ENCODE measurements at regions of chr17 and their contacts with region 1.

Region 1: GRCh38 chr17:17919169-17920107 is 52.8 kb downstream of the TOM1L2 start:
- DNase-seq: peak; percentile 39
- H3K4me3 ChIP-seq: no peak overlapping the region
- H3K27ac ChIP-seq: peak overlapping the region; percentile 21
- H3K27me3 ChIP-seq: no peaks in the 10 kb centered on the region
- CTCF ChIP-seq: peak; percentile 89

Region 2: GRCh38 chr17:17890773-17891759 is 28.4 kb before region 1 on chr17:
- CTCF ChIA-PET with region 1: interaction called, 16 read pairs
- POLR2A ChIA-PET with region 1: no interaction called
- DNase-seq: peak; percentile 42
- H3K4me3 ChIP-seq: no peak overlapping the region
- H3K27ac ChIP-seq: no peak overlapping the region
- H3K27me3 ChIP-seq: no peaks in the 10 kb centered on the region
- CTCF ChIP-seq: peak; percentile 92

Region 3: DNA sequence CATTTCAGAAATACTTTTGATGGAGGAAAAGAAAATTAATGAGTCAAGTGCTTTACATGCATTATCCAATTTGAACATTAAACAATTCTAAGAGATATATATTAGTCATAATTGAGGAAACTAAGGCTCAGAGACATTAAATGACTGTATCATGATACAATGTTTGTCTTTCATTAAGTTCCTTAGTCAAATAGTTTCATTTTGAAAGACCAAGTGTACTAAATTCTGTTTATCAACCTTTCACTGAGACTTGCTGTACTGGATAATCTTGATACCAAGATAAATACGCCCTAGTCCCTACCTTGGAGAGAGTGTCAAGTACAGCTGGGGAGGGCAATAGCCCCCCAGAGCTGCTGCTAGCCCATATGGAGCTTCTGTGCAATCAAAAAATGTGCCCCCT is 28.5 kb after region 1 on chr17:
- CTCF ChIA-PET with region 1: interaction called, 12 read pairs
- POLR2A ChIA-PET with region 1: no interaction called
- DNase-seq: no peak
- H3K4me3 ChIP-seq: no peak overlapping the region
- H3K27ac ChIP-seq: peak overlapping the region; percentile 31
- H3K27me3 ChIP-seq: no peaks in the 10 kb centered on the region
- CTCF ChIP-seq: no peak

Measured in AG04450 (cell line).